ENCODE measurements at regions of chr9 and their contacts with region 1.

Region 1: DNA sequence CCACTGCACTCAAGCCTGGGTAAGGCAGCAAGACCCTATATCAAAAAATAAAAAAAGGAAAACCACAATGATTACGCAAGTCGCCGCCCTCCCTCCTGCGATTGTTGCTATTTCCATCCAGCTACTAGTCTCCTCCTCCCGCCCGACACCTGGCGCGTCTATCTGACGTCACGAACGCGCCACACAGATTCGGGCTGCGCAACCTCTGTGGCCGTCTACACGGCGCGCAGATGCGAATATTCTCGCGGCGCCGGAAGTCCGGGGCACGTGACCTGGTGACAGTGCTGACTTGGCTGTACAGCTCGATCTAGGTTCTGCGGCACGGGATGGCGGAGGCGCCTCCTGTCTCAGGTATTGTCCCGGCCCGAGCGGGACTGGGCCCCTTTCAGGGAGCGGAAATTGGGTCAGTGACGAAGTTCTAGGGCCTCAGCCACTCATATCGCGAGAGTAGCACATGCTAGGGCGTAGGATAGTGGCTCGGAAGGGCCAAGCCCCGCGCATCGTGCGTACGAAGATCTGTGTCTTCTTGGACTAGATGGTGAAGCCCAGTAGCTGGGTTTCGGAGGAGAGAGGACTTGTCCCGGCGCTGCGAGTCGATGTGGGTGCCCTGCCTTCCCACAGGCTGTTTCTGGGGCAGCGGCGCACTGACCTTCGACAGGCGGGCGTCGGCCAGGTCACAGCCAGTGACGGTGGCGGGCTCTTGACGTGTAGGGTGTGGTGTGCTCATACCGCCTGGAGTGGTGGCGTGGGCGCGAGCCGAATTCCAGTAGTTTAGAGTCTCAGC is at the start of gene NFX1:
- DNase-seq: peak; percentile 99 to 100 (median 100)
- H3K4me3 ChIP-seq: peak within 1 kb of the TSS; percentile 63 to 79
- H3K4me3 Mint-ChIP-seq: peak within 1 kb of the TSS; percentile 84 to 98 (median 96)
- H3K27ac ChIP-seq: peak within 1 kb of the TSS; percentile 98
- H3K27ac Mint-ChIP-seq: peak within 1 kb of the TSS; percentile 96 to 100 (median 100)
- H3K4me1 ChIP-seq: peaks cover 62% of the 10 kb centered on the region
- H3K4me1 Mint-ChIP-seq: peaks cover 32 to 64% (median 51%) of the 10 kb centered on the region in 4 donors
- H3K27me3 ChIP-seq: no peaks in the 10 kb centered on the region
- H3K27me3 Mint-ChIP-seq: no peaks in the 10 kb centered on the region
- total RNA-seq, gene NFX1: 63.7 to 64.7 TPM

Region 2: GRCh38 chr9:33024966-33025571 is 265.4 kb before region 1 on chr9 and contains the start of gene DNAJA1:
- CTCF ChIA-PET with region 1: no interaction called
- POLR2A ChIA-PET with region 1: interaction called, 26 read pairs
- intact Hi-C with region 1: loop called (anchors 1 kb)
- DNase-seq: peak; percentile 92 to 98 (median 97)
- H3K4me3 ChIP-seq: peak within 1 kb of the TSS; percentile 96 to 100
- H3K4me3 Mint-ChIP-seq: peak within 1 kb of the TSS; percentile 92 to 99 (median 96)
- H3K27ac ChIP-seq: peak within 1 kb of the TSS; percentile 100
- H3K27ac Mint-ChIP-seq: peak within 1 kb of the TSS; percentile 94 to 98 (median 97)
- H3K4me1 ChIP-seq: peaks cover 63% of the 10 kb centered on the region
- H3K4me1 Mint-ChIP-seq: peaks cover 41 to 82% (median 66%) of the 10 kb centered on the region in 4 donors
- H3K27me3 ChIP-seq: no peaks in the 10 kb centered on the region
- H3K27me3 Mint-ChIP-seq: no peaks in the 10 kb centered on the region
- total RNA-seq, gene DNAJA1: 79.8 to 84.4 TPM

Region 3: DNA sequence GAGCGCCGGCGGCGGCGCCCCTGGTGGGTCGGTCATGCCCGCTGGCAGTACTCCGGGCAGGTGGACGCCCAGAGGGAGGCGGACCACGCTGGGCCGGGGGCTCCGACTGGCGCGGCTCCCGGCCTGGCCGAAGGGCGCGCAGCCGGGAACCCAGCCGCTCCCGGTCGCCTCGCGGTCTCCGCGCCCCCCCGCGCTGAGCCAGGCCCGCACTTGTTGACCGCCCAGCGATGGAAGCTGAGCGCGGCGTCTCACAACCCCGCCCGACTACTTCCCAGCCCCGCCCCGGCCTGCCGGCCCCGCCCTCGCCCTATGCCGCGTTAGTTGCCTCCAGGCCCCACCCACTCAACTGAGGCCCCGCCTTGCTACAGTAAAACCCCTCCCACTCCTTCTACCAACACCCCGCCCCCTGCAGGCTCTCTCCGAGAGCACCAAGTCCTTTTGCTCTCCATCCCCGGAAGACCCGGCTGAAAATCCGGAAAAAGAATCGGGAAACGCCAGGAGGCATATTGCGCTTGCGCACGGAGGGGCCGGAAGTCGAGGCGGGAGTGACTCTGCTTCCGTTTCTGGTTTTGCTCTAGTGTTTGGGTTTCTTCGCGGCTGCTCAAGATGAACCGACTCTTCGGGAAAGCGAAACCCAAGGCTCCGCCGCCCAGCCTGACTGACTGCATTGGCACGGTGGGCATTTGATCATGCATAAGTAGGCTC is 25.8 kb before region 1 on chr9 and contains the starts of genes BAG1 and CHMP5:
- CTCF ChIA-PET with region 1: interaction called, 5 read pairs
- POLR2A ChIA-PET with region 1: interaction called, 58 read pairs
- intact Hi-C with region 1: loop called (anchors 1 kb)
- DNase-seq: peak; percentile 99 to 100 (median 100)
- H3K4me3 ChIP-seq: peak within 1 kb of the TSS; percentile 71 to 85
- H3K4me3 Mint-ChIP-seq: peak within 1 kb of the TSS; percentile 95 to 100 (median 97)
- H3K27ac ChIP-seq: peak within 1 kb of the TSS; percentile 76
- H3K27ac Mint-ChIP-seq: peak within 1 kb of the TSS; percentile 90 to 99 (median 98)
- H3K4me1 ChIP-seq: peaks cover 38% of the 10 kb centered on the region
- H3K4me1 Mint-ChIP-seq: peaks cover 38 to 53% (median 44%) of the 10 kb centered on the region in 4 donors
- H3K27me3 ChIP-seq: no peaks in the 10 kb centered on the region
- H3K27me3 Mint-ChIP-seq: no peaks in the 10 kb centered on the region
- total RNA-seq, gene BAG1: 53.5 to 56.3 TPM
- total RNA-seq, gene CHMP5: 32.3 to 35.0 TPM

Region 4: GRCh38 chr9:33374634-33375213 is 84.3 kb after region 1 on chr9:
- CTCF ChIA-PET with region 1: interaction called, 16 read pairs
- POLR2A ChIA-PET with region 1: interaction called, 3 read pairs
- intact Hi-C with region 1: no loop called
- DNase-seq: peak; percentile 61 to 71 (median 67)
- H3K4me3 ChIP-seq: no peak overlapping the region
- H3K4me3 Mint-ChIP-seq: peak overlapping the region in 1 of 8 donors; percentile 11
- H3K27ac ChIP-seq: no peak overlapping the region
- H3K27ac Mint-ChIP-seq: peak overlapping the region in 5 of 7 donors; percentile 38 to 74 (median 66)
- H3K4me1 ChIP-seq: peaks cover 3% of the 10 kb centered on the region
- H3K4me1 Mint-ChIP-seq: peaks cover 0 to 7% (median 5%) of the 10 kb centered on the region in 4 donors
- H3K27me3 ChIP-seq: no peaks in the 10 kb centered on the region
- H3K27me3 Mint-ChIP-seq: no peaks in the 10 kb centered on the region

Region 5: GRCh38 chr9:33466565-33467495 is 176.4 kb after region 1 on chr9:
- CTCF ChIA-PET with region 1: interaction called, 14 read pairs
- POLR2A ChIA-PET with region 1: interaction called, 5 read pairs
- intact Hi-C with region 1: no loop called
- DNase-seq: peak; percentile 57 to 77 (median 61)
- H3K4me3 ChIP-seq: no peak overlapping the region
- H3K4me3 Mint-ChIP-seq: no peak overlapping the region
- H3K27ac ChIP-seq: no peak overlapping the region
- H3K27ac Mint-ChIP-seq: peak overlapping the region; percentile 13 to 83 (median 50)
- H3K4me1 ChIP-seq: peaks cover 6% of the 10 kb centered on the region
- H3K4me1 Mint-ChIP-seq: peaks cover 5 to 12% (median 7%) of the 10 kb centered on the region in 4 donors
- H3K27me3 ChIP-seq: no peaks in the 10 kb centered on the region
- H3K27me3 Mint-ChIP-seq: no peaks in the 10 kb centered on the region

Region 6: GRCh38 chr9:34048923-34049697 is 758.7 kb after region 1 on chr9:
- CTCF ChIA-PET with region 1: no interaction called
- POLR2A ChIA-PET with region 1: no interaction called
- intact Hi-C with region 1: loop called (anchors 5 kb)
- DNase-seq: peak; percentile 97 to 99 (median 97)
- H3K4me3 ChIP-seq: peak overlapping the region; percentile 90 to 100
- H3K4me3 Mint-ChIP-seq: peak overlapping the region; percentile 95 to 99 (median 98)
- H3K27ac ChIP-seq: peak overlapping the region; percentile 88
- H3K27ac Mint-ChIP-seq: peak overlapping the region; percentile 98 to 100 (median 99)
- H3K4me1 ChIP-seq: peaks cover 27% of the 10 kb centered on the region
- H3K4me1 Mint-ChIP-seq: peaks cover 23 to 43% (median 31%) of the 10 kb centered on the region in 4 donors
- H3K27me3 ChIP-seq: no peaks in the 10 kb centered on the region
- H3K27me3 Mint-ChIP-seq: no peaks in the 10 kb centered on the region

Measured in CD4-positive, alpha-beta memory T cell (primary cell).